ENCODE measurements at regions of chr10 and their contacts with region 1.

Region 1: DNA sequence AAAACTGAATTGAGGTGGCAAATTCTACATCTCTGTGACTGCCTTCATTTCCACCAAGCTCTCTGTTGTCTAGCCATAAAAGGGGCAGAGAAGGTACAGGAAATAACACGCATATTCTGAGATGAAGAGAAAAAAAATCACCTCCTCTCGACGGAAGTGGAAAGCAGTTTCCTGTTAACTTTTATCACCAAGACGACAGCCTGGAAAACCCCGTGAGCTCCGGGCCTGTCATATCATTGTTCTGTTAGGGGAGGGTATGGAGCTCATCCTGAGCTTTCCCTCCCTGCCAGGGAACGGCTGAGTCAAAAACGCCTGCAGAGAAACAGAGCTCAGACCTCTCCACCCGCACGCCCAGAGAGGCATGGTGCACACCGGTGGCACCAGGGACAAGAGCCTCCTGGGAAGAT is 200.3 kb downstream of the PRPF18 start:
- DNase-seq: no peak
- ATAC-seq: peak; percentile 7 to 62
- H3K4me3 ChIP-seq: no peak overlapping the region
- H3K27ac ChIP-seq: no peak overlapping the region
- H3K4me1 ChIP-seq: peaks cover 11% of the 10 kb centered on the region
- H3K27me3 ChIP-seq: no peaks in the 10 kb centered on the region

Region 2: DNA sequence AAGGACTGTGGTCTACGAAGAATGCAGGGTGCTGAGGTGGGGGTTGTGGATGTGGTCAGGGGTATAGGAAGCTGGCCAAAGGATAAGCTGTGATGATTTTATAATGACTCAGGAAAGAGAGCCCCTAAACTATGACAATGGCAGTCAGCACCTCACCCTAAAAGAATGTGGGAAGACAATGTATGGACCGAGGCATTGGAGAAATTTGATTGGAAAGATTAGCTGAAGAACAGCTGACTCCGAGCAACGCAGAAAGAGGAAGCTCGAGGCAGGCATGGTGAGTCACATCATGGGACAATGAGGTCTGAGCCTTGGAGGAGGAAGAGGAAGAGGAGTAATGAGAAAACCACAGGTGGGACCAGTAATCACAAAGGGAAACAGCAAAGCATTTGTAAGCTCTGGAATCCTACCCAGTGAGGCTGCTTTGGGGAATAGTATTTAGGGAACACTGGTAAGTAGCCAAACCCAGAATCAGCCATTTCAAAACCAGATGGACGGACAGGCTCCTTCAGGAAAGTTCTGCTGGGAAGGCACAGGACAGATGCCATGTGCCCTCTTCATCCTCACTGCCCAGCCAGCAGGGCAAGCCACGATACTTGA is 95.2 kb after region 1 on chr10:
- intact Hi-C with region 1: loop called in 1 of 4 experiments (anchors 10 kb)
- DNase-seq: no peak
- ATAC-seq: peak in 1 of 2 donors; percentile 67
- H3K4me3 ChIP-seq: no peak overlapping the region
- H3K27ac ChIP-seq: peak overlapping the region; percentile 87
- H3K4me1 ChIP-seq: peaks cover 19% of the 10 kb centered on the region
- H3K27me3 ChIP-seq: no peaks in the 10 kb centered on the region

Region 3: DNA sequence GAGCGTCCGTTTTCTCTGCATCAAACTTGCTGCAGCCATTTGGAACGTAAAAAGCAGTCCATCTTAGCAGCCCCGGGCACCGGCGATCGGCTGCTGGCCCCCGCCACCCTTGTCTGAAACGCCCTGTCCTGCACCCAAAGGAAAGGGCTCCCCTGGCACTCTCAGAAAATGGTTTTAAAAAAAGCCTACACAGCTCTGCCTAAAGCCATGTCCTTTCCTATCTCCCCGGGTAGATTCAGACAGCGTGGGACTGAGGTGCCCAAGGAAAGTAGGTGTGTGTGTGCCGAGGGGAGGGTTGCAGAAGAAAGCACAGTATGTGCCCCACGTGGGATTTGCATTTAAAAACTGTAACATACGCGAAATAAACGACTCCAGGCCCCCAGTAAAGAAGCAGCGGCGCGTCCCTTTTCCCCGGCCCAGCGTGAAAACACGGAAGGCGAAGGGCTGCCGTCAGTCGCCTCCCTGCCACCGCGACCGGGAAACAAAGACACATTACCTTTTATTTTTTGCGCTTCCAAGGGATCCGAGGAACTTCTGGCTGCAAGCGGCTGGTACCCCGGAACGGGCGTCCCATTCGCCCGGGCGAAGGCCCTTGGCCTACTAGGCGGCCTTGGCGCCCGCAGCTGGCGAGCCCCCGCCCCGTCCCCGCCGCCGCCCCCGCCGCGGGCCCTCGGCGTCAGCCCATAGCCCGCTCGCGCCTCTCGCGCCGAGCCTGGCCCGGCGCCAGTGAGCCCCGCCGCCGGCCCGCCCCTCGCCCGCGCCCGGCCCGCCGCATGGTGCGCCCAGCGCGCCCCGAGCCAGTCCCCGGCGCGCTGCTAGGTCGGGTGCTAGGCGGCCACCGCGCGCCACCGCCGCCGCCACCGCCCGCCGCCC is 104.3 kb after region 1 on chr10:
- intact Hi-C with region 1: loop called in 2 of 4 experiments (anchors 5 to 10 kb)
- DNase-seq: peak in 2 of 3 donors; percentile 75 to 78
- ATAC-seq: peak; percentile 64 to 71
- H3K4me3 ChIP-seq: peak overlapping the region; percentile 99
- H3K27ac ChIP-seq: peak overlapping the region; percentile 90
- H3K4me1 ChIP-seq: peaks cover 19% of the 10 kb centered on the region
- H3K27me3 ChIP-seq: no peaks in the 10 kb centered on the region

Region 4: GRCh38 chr10:13956826-13957225 is 169.8 kb after region 1 on chr10:
- intact Hi-C with region 1: loop called in 1 of 4 experiments (anchors 5 kb)
- DNase-seq: peak; percentile 78 to 92 (median 83)
- ATAC-seq: peak; percentile 91 to 93
- H3K4me3 ChIP-seq: no peak overlapping the region
- H3K27ac ChIP-seq: peak overlapping the region; percentile 59
- H3K4me1 ChIP-seq: peaks cover 2% of the 10 kb centered on the region
- H3K27me3 ChIP-seq: no peaks in the 10 kb centered on the region

Region 5: GRCh38 chr10:14093730-14094484 is 306.9 kb after region 1 on chr10:
- intact Hi-C with region 1: loop called (anchors 2 to 5 kb)
- DNase-seq: peak in 1 of 3 donors; percentile 59
- ATAC-seq: peak in 1 of 2 donors; percentile 31
- H3K4me3 ChIP-seq: no peak overlapping the region
- H3K27ac ChIP-seq: no peak overlapping the region
- H3K4me1 ChIP-seq: no peaks in the 10 kb centered on the region
- H3K27me3 ChIP-seq: no peaks in the 10 kb centered on the region

Region 6: GRCh38 chr10:14478604-14479003 is 691.6 kb after region 1 on chr10:
- intact Hi-C with region 1: loop called in 1 of 4 experiments (anchors 5 kb)
- DNase-seq: peak; percentile 63 to 87 (median 79)
- ATAC-seq: peak; percentile 60 to 76
- H3K4me3 ChIP-seq: no peak overlapping the region
- H3K27ac ChIP-seq: no peak overlapping the region
- H3K4me1 ChIP-seq: no peaks in the 10 kb centered on the region
- H3K27me3 ChIP-seq: no peaks in the 10 kb centered on the region

Measured in right cardiac atrium (tissue), 5 donors.